ENCODE measurements at regions of chr15 and their contacts with region 1.

Region 1: DNA sequence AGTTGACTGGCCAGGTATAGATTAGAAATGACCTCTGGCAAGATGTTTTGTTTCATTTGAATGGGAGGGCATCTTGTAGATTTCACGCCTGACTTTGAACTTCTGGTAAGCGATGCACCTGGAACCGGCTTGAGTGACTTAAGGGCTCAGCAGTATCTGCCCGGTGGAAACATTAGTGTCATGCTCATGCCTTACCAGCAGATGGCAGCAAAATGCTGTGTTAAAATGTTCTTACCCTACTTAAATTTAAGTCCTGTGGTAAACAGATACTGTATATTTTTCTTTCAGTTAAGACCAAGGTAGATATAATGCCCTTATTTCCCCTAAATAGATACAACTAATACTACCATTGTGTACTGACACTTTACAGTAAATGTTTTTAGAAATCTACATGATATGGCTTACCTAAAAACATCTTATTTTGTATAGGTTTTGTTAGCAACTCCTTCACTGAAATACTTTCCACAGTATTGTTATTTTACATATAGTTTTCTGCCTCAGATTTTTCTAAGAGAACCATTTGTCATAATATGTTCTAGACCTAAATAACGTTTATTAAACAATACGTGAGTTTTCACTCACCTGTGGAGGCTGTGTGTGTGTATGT is 25.5 kb downstream of the ASB7 start:
- DNase-seq: peak; percentile 56 to 74 (median 66)
- H3K4me3 ChIP-seq: no peak overlapping the region
- H3K4me3 Mint-ChIP-seq: no peak overlapping the region
- H3K27ac ChIP-seq: no peak overlapping the region
- H3K27ac Mint-ChIP-seq: peak overlapping the region in 1 of 7 donors; percentile 8
- H3K4me1 ChIP-seq: peaks cover 6 to 10% of the 10 kb centered on the region in 2 donors
- H3K4me1 Mint-ChIP-seq: peaks cover 11% of the 10 kb centered on the region
- H3K27me3 ChIP-seq: no peaks in the 10 kb centered on the region
- H3K27me3 Mint-ChIP-seq: peaks cover 0 to 4% (median 4%) of the 10 kb centered on the region in 3 donors
- CTCF ChIP-seq: peak; percentile 93

Region 2: GRCh38 chr15:100873029-100873677 is 245.3 kb after region 1 on chr15:
- intact Hi-C with region 1: loop called (anchors 2 to 5 kb)
- DNase-seq: peak; percentile 72 to 87 (median 86)
- H3K4me3 ChIP-seq: no peak overlapping the region
- H3K4me3 Mint-ChIP-seq: no peak overlapping the region
- H3K27ac ChIP-seq: no peak overlapping the region
- H3K27ac Mint-ChIP-seq: peak overlapping the region in 2 of 7 donors; percentile 44 to 46
- H3K4me1 ChIP-seq: no peaks in the 10 kb centered on the region
- H3K4me1 Mint-ChIP-seq: peaks cover 5% of the 10 kb centered on the region
- H3K27me3 ChIP-seq: peaks cover 17 to 37% of the 10 kb centered on the region in 2 donors
- H3K27me3 Mint-ChIP-seq: peaks cover 31 to 36% (median 36%) of the 10 kb centered on the region in 3 donors
- CTCF ChIP-seq: peak; percentile 95

Region 3: DNA sequence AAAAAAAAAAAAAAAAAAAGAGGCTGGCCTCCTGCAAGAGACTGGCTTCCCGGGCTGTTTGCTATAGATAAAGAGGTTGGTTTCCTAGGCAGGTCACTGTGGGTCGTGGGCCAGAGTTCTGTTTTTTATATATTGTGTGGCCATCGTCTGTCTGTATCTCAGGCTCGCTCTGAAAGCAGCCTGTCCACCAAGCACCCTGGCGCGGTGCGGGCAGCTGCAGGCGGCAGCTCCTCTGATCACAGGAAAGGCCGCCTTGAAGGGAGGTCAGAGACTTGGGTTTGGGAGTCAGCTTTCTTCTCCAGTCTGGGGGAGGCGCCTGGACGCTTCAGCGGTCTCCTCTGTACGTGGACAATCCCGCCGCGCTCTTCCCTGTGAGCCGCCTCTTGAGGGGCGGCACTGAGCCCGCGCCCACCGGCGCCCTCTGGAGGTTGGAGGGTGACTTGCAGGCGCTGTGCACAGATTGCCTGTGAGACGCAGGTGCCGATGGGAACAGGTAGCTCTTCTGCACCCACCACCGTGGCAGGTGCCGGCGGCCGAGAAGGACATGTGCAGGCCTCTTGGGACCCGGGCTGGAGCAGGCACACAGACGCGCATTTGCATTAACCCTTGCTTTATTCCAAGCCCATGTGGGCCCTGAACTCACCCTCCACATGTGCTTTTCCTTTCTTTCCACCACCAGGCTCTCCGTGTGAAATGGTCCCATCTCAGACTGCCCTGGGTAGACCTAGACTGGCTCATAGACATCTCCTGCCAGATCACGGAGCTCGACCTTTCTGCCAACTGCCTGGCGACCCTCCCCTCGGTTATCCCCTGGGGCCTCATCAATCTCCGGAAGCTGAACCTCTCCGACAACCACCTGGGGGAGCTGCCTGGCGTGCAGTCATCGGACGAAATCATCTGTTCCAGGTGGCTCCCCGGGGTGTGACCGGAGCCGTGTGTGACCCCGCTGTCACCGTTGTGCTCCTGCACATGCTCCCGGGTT is 380.6 kb after region 1 on chr15:
- intact Hi-C with region 1: loop called (anchors 2 to 5 kb)
- DNase-seq: peak; percentile 66 to 69 (median 69)
- H3K4me3 ChIP-seq: peak overlapping the region; percentile 33 to 74 (median 47)
- H3K4me3 Mint-ChIP-seq: peak overlapping the region; percentile 72 to 88
- H3K27ac ChIP-seq: no peak overlapping the region
- H3K27ac Mint-ChIP-seq: peak overlapping the region in 3 of 7 donors; percentile 25 to 64 (median 44)
- H3K4me1 ChIP-seq: peaks cover 19 to 21% of the 10 kb centered on the region in 2 donors
- H3K4me1 Mint-ChIP-seq: peaks cover 21% of the 10 kb centered on the region
- H3K27me3 ChIP-seq: peaks cover 0 to 5% of the 10 kb centered on the region in 2 donors
- H3K27me3 Mint-ChIP-seq: peaks cover 9 to 17% (median 15%) of the 10 kb centered on the region in 3 donors
- CTCF ChIP-seq: peak; percentile 98